Ovary (tissue), 10 donors: ENCODE measurements at regions of chrX and their contacts with region 1.

Region 1: GRCh38 chrX:22577181-22577580 is 304.5 kb downstream of the CBLL2 start:
- DNase-seq: no peak
- H3K4me3 ChIP-seq: no peak overlapping the region
- H3K27ac ChIP-seq: no peak overlapping the region
- H3K4me1 ChIP-seq: no peaks in the 10 kb centered on the region
- H3K27me3 ChIP-seq: no peaks in the 10 kb centered on the region
- CTCF ChIP-seq: no peak
- EP300 ChIP-seq: no peak
- POLR2A ChIP-seq: no peak

Region 2: GRCh38 chrX:22603060-22603459 is 25.9 kb after region 1 on chrX:
- intact Hi-C with region 1: loop called in 1 of 4 experiments (anchors 1 kb)
- DNase-seq: no peak
- H3K4me3 ChIP-seq: no peak overlapping the region
- H3K27ac ChIP-seq: no peak overlapping the region
- H3K4me1 ChIP-seq: no peaks in the 10 kb centered on the region
- H3K27me3 ChIP-seq: no peaks in the 10 kb centered on the region
- CTCF ChIP-seq: no peak
- EP300 ChIP-seq: no peak
- POLR2A ChIP-seq: no peak